ENCODE measurements at regions of chr11 and their contacts with region 1.

Region 1: GRCh38 chr11:11931461-11932055 is 76.9 kb downstream of the DKK3 start:
- DNase-seq: peak; percentile 47
- H3K4me3 ChIP-seq: no peak overlapping the region
- H3K27ac ChIP-seq: 0 out of 4 replicates have a peak overlapping the region, but pooled peaks of 1 of the 2 experiments have one; percentile 16
- H3K4me1 ChIP-seq: no peaks in the 10 kb centered on the region; a peak in 1 of 4 replicates
- H3K27me3 ChIP-seq: no peaks in the 10 kb centered on the region
- CTCF ChIP-seq: peak; percentile 82
- EP300 ChIP-seq: no peak
- RAD21 ChIP-seq: peak; percentile 89

Region 2: DNA sequence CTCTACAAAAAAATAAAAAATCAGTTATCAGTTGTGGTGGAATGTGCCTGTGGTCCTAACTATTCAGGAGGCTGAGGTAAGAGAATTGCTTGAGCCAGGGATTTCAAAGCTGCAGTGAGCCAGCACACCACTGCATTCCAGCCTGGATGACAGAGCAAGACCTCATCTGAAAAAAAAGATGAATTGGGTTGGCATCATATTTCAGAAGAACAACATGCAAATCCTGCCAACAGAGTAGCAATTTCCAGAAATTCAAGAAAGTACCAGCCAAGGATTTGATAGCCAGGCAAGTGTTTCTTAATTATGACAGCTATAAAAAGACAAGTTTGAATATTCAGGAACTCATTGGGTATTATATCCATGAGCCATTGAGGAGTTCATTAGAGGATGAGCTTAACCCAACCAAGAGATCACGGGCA is 14.6 kb before region 1 on chr11:
- CTCF ChIA-PET with region 1: interaction called, 11 read pairs
- POLR2A ChIA-PET with region 1: no interaction called
- DNase-seq: no peak
- H3K4me3 ChIP-seq: no peak overlapping the region
- H3K27ac ChIP-seq: peak overlapping the region in 1 of 2 experiments; percentile 28; a peak in 1 of 4 replicates
- H3K4me1 ChIP-seq: 0 out of 4 replicates have a peak, but pooled peaks cover 0 to 11% of the 10 kb centered on the region in 2 experiments
- H3K27me3 ChIP-seq: no peaks in the 10 kb centered on the region
- CTCF ChIP-seq: no peak
- EP300 ChIP-seq: no peak
- RAD21 ChIP-seq: no peak

Region 3: DNA sequence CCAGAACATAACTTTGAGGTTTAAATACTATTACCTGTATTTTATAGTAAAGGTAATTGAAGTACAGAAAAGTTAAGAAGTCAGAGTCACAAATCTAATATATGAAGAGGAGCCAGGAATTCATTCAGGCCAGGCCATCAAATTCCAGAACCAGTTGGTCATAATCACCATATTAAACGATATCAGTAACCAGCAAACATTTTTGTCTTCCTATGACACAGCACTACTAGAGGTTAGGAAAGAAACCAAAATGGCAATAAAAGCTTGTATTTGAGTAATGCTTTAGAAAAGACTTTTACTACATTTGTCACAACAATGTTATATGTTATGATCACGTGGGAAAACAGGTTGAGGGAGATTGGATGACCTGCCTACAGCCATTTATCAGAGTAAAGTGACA is 14.6 kb after region 1 on chr11:
- CTCF ChIA-PET with region 1: interaction called, 16 read pairs
- POLR2A ChIA-PET with region 1: no interaction called
- DNase-seq: no peak
- H3K4me3 ChIP-seq: no peak overlapping the region
- H3K27ac ChIP-seq: peak overlapping the region; percentile 60 to 65
- H3K4me1 ChIP-seq: peaks cover 5 to 13% of the 10 kb centered on the region in 2 experiments
- H3K27me3 ChIP-seq: no peaks in the 10 kb centered on the region
- CTCF ChIP-seq: no peak
- EP300 ChIP-seq: no peak
- RAD21 ChIP-seq: no peak

Region 4: GRCh38 chr11:11977206-11977938 is 45.8 kb after region 1 on chr11:
- CTCF ChIA-PET with region 1: interaction called, 19 read pairs
- POLR2A ChIA-PET with region 1: no interaction called
- DNase-seq: no peak
- H3K4me3 ChIP-seq: no peak overlapping the region
- H3K27ac ChIP-seq: peak overlapping the region; percentile 99 to 100
- H3K4me1 ChIP-seq: peaks cover 83 to 93% of the 10 kb centered on the region in 2 experiments
- H3K27me3 ChIP-seq: no peaks in the 10 kb centered on the region
- CTCF ChIP-seq: no peak
- EP300 ChIP-seq: peak; percentile 64 to 97
- RAD21 ChIP-seq: no peak

Region 5: GRCh38 chr11:11989774-11990744 is 58.5 kb after region 1 on chr11:
- CTCF ChIA-PET with region 1: interaction called, 10 read pairs
- POLR2A ChIA-PET with region 1: no interaction called
- DNase-seq: no peak
- H3K4me3 ChIP-seq: no peak overlapping the region
- H3K27ac ChIP-seq: peak overlapping the region; percentile 93 to 99
- H3K4me1 ChIP-seq: peaks cover 53 to 57% of the 10 kb centered on the region in 2 experiments
- H3K27me3 ChIP-seq: no peaks in the 10 kb centered on the region
- CTCF ChIP-seq: no peak
- EP300 ChIP-seq: peak in 1 of 2 experiments; percentile 77; a peak in 2 of 4 replicates
- RAD21 ChIP-seq: peak; percentile 8; the same call in 1 of the 2 replicates

Region 6: GRCh38 chr11:12008790-12009616 is 77.4 kb after region 1 on chr11:
- CTCF ChIA-PET with region 1: interaction called, 11 read pairs
- POLR2A ChIA-PET with region 1: no interaction called
- DNase-seq: peak; percentile 99
- H3K4me3 ChIP-seq: peak overlapping the region; percentile 92 to 94
- H3K27ac ChIP-seq: peak overlapping the region; percentile 77 to 85
- H3K4me1 ChIP-seq: peaks cover 29 to 33% of the 10 kb centered on the region in 2 experiments; a peak in 3 of 4 replicates
- H3K27me3 ChIP-seq: no peaks in the 10 kb centered on the region
- CTCF ChIP-seq: no peak
- EP300 ChIP-seq: no peak
- RAD21 ChIP-seq: no peak

Region 7: GRCh38 chr11:12375720-12376119 is 444.2 kb after region 1 on chr11:
- CTCF ChIA-PET with region 1: no interaction called
- POLR2A ChIA-PET with region 1: no interaction called
- DNase-seq: no peak
- H3K4me3 ChIP-seq: no peak overlapping the region
- H3K27ac ChIP-seq: peak overlapping the region in 1 of 2 experiments; percentile 90; a peak in 2 of 4 replicates
- H3K4me1 ChIP-seq: peaks cover 0 to 14% of the 10 kb centered on the region in 2 experiments; a peak in 3 of 4 replicates
- H3K27me3 ChIP-seq: no peaks in the 10 kb centered on the region
- CTCF ChIP-seq: no peak
- EP300 ChIP-seq: no peak
- RAD21 ChIP-seq: no peak